Heart right ventricle (tissue), 16 donors: ENCODE measurements at regions of chr11 and their contacts with region 1.

Region 1: GRCh38 chr11:65569973-65570918 is at the start of gene ZNRD2:
- DNase-seq: peak; percentile 97 to 98
- ATAC-seq: peak; percentile 85 to 92 (median 90)
- H3K4me3 ChIP-seq: peak within 1 kb of the TSS; percentile 54 to 98 (median 86)
- H3K27ac ChIP-seq: peak within 1 kb of the TSS; percentile 73 to 98 (median 94)
- H3K4me1 ChIP-seq: peaks cover 24 to 76% (median 59%) of the 10 kb centered on the region in 9 donors
- H3K27me3 ChIP-seq: no peaks in the 10 kb centered on the region
- CTCF ChIP-seq: peak in 8 of 9 donors; percentile 39 to 73 (median 62)
- total RNA-seq, gene ZNRD2: 23.7 to 44.0 (median 26.3) TPM

Region 2: GRCh38 chr11:65606876-65607613 is 36.8 kb after region 1 on chr11:
- intact Hi-C with region 1: loop called in 4 of 10 experiments (anchors 5 kb)
- DNase-seq: peak; percentile 93 to 96
- ATAC-seq: peak; percentile 92 to 96 (median 94)
- H3K4me3 ChIP-seq: peak overlapping the region in 9 of 10 donors; percentile 12 to 49 (median 42)
- H3K27ac ChIP-seq: peak overlapping the region in 9 of 10 donors; percentile 39 to 90 (median 82)
- H3K4me1 ChIP-seq: peaks cover 27 to 73% (median 47%) of the 10 kb centered on the region in 9 donors
- H3K27me3 ChIP-seq: no peaks in the 10 kb centered on the region
- CTCF ChIP-seq: peak in 1 of 9 donors; percentile 16

Region 3: GRCh38 chr11:65615229-65615941 is 45.1 kb after region 1 on chr11 and contains the start of gene PCNX3:
- intact Hi-C with region 1: loop called in 5 of 10 experiments (anchors 2 to 5 kb)
- DNase-seq: peak; percentile 100
- ATAC-seq: peak; percentile 79 to 91 (median 86)
- H3K4me3 ChIP-seq: peak within 1 kb of the TSS; percentile 91 to 99 (median 97)
- H3K27ac ChIP-seq: peak within 1 kb of the TSS; percentile 92 to 100 (median 98)
- H3K4me1 ChIP-seq: peaks cover 28 to 50% (median 43%) of the 10 kb centered on the region in 9 donors
- H3K27me3 ChIP-seq: no peaks in the 10 kb centered on the region
- CTCF ChIP-seq: no peak
- total RNA-seq, gene PCNX3: 9.4 to 16.9 (median 11.7) TPM